ENCODE measurements at regions of chr17 and their contacts with region 1.

Region 1: GRCh38 chr17:63445979-63446691 is at the start of gene CYB561:
- DNase-seq: peak; percentile 63
- H3K4me3 ChIP-seq: peak within 1 kb of the TSS; percentile 2 to 49 (median 44)
- H3K27ac ChIP-seq: peak within 1 kb of the TSS; percentile 80
- H3K4me1 ChIP-seq: peaks cover 41% of the 10 kb centered on the region
- H3K27me3 ChIP-seq: no peaks in the 10 kb centered on the region
- CTCF ChIP-seq: peak; percentile 29 to 61
- POLR2A ChIP-seq: no peak
- total RNA-seq, gene CYB561: 71.1 and 72.4 TPM in 2 replicates

Region 2: GRCh38 chr17:63196772-63197335 is 249.3 kb before region 1 on chr17:
- CTCF ChIA-PET with region 1: no interaction called
- POLR2A ChIA-PET with region 1: no interaction called
- dilution Hi-C with region 1: no loop called
- intact Hi-C with region 1: no loop called
- DNase-seq: peak; percentile 54
- H3K4me3 ChIP-seq: peak overlapping the region in 1 of 3 experiments; percentile 48
- H3K27ac ChIP-seq: no peak overlapping the region
- H3K4me1 ChIP-seq: no peaks in the 10 kb centered on the region
- H3K27me3 ChIP-seq: no peaks in the 10 kb centered on the region
- CTCF ChIP-seq: no peak
- POLR2A ChIP-seq: no peak

Region 3: DNA sequence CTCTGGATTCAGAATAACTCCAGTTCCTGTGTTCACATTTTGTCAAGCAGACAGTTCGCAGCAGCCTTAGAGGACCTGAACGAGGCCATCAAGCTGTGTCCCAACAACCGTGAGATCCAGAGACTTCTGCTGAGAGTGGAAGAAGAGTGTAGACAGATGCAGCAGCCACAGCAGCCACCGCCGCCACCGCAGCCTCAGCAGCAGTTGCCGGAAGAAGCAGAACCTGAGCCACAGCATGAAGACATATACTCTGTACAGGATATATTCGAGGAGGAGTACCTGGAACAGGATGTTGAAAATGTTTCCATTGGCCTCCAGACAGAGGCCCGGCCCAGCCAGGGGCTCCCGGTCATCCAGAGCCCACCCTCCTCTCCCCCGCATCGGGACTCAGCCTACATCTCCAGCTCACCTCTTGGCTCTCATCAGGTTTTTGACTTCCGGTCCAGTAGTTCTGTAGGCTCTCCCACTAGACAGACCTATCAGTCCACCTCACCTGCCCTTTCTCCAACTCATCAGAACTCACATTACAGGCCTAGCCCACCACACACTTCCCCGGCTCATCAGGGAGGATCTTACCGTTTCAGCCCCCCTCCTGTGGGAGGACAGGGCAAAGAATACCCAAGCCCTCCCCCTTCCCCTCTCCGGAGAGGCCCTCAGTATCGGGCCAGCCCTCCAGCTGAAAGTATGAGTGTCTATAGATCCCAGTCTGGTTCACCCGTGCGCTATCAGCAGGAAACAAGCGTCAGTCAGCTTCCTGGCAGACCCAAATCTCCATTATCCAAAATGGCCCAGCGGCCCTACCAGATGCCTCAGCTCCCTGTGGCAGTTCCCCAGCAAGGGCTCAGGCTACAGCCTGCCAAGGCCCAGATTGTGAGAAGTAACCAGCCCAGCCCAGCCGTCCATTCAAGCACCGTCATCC is 25.9 kb before region 1 on chr17:
- CTCF ChIA-PET with region 1: interaction called, 66 read pairs
- POLR2A ChIA-PET with region 1: interaction called, 3 read pairs
- dilution Hi-C with region 1: no loop called
- intact Hi-C with region 1: loop called (anchors 1 kb)
- DNase-seq: peak; percentile 97
- H3K4me3 ChIP-seq: no peak overlapping the region
- H3K27ac ChIP-seq: peak overlapping the region; percentile 61
- H3K4me1 ChIP-seq: peaks cover 33% of the 10 kb centered on the region
- H3K27me3 ChIP-seq: no peaks in the 10 kb centered on the region
- CTCF ChIP-seq: no peak
- POLR2A ChIP-seq: peak; percentile 65

Region 4: DNA sequence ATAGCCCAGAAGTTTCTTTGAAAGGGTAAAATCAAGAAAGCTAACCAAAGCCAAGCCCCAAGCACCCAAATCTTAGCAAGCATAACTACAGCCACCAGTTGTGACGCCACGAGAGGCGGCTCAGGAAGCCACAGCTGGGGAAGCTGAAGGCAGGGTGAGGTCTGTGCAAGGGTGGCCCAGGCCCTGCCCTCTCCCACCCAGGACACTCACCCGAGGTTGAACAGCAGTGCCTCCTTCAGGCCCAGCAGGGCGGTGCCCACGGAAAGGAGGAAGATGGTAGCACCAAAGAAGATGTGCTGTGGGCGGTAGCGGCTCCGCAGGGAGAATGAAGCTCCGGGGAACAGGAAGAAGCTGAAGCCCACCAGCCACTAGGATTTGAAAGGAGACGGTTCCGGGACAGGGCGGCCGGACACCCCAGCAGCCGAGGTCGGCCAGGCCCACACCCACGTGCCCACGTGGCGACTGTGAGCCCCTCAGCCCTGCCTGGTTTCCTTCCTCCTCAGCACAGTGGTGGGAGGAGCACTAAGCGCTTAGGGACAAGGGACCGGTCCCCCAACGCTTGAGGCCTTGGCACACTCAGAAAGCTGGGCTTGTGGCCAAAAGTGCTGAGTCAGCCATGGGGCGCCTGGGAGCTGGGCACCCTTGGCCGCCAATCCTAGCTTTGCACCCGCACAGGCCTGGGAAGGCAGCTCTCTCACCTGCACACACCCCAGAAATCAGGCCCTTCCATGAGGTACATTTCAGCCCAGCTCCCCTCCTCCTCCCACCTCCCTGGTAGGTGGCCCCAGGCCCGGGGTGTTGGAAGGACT is 11.1 kb before region 1 on chr17:
- CTCF ChIA-PET with region 1: interaction called, 17 read pairs
- POLR2A ChIA-PET with region 1: interaction called, 4 read pairs
- dilution Hi-C with region 1: no loop called
- intact Hi-C with region 1: loop called (anchors 1 kb)
- DNase-seq: peak; percentile 39
- H3K4me3 ChIP-seq: no peak overlapping the region
- H3K27ac ChIP-seq: no peak overlapping the region
- H3K4me1 ChIP-seq: peaks cover 35% of the 10 kb centered on the region
- H3K27me3 ChIP-seq: no peaks in the 10 kb centered on the region
- CTCF ChIP-seq: peak; percentile 23 to 27
- POLR2A ChIP-seq: no peak

Region 5: DNA sequence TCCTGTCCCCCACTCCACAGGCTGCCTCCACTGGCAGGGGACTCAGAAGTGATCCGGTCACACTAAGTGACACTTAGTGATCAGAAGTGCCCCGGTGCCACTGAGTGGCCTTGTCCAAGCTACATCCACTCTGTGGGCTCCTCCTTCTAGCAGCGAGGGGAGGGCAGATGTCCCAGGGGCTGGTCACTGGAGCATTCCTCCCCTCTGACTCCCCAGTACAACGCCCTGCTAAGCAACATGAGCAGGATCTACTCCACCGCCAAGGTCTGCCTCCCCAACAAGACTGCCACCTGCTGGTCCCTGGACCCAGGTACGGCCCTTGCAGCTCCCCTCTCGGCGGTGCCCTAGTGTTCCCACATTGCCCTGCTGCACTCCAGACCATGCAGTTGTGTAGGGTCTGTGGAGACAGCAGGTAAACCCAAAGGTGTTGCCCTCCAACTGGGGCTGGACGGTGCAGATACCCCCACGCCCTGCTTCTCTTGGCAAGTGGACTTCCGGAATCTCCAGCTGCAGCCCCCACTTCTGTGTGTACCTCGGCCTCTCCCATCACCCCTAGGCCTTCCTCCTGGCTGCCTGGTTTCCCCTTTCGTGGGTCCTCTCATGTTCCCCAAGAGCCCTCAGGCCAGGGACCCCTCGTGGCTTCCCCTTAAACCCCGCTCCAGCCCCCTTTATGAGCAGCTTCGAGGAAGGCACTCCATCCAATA is 32.8 kb after region 1 on chr17:
- CTCF ChIA-PET with region 1: interaction called, 134 read pairs
- POLR2A ChIA-PET with region 1: interaction called, 13 read pairs
- dilution Hi-C with region 1: no loop called
- intact Hi-C with region 1: loop called (anchors 1 kb)
- DNase-seq: peak; percentile 81
- H3K4me3 ChIP-seq: peak overlapping the region in 1 of 3 experiments; percentile 62
- H3K27ac ChIP-seq: no peak overlapping the region
- H3K4me1 ChIP-seq: peaks cover 27% of the 10 kb centered on the region
- H3K27me3 ChIP-seq: no peaks in the 10 kb centered on the region
- CTCF ChIP-seq: peak; percentile 87 to 96
- POLR2A ChIP-seq: no peak

Region 6: DNA sequence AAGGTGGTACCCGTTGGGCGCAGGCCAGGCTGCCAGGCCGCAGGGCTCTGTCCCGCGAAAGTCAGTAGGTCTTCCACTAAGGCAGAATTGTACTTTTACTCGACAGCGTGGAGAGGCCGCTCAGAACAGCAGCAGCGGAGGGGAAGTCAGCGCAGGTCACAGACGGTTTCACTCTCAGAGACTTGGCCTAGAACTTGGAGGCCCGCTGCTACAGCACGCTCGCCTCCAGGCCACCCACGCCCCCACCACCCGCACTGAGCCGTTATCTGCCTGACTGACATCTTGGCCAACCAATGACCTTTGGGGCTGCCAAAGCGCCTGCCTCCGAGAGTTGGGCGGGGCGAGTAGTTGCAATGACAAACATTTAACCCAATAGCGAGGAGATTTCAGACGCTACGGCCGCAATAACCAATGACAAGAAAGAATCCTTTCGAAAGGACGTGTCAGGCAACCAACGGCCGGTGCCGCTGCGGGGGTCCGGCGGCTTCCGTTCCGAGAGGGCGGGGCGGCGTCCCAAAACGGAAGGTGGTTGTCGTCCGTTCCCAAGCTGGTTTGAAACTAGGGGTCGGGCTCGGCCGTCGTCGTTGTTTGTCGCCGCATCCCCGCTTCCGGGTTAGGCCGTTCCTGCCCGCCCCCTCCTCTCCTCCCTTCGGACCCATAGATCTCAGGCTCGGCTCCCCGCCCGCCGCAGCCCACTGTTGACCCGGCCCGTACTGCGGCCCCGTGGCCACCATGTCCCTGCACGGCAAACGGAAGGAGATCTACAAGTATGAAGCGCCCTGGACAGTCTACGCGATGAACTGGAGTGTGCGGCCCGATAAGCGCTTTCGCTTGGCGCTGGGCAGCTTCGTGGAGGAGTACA is 104.0 kb after region 1 on chr17 and contains the start of gene DCAF7:
- CTCF ChIA-PET with region 1: no interaction called
- POLR2A ChIA-PET with region 1: no interaction called
- dilution Hi-C with region 1: no loop called
- intact Hi-C with region 1: loop called (anchors 2 kb)
- DNase-seq: peak; percentile 100
- H3K4me3 ChIP-seq: peak within 1 kb of the TSS; percentile 42 to 77 (median 64)
- H3K27ac ChIP-seq: peak within 1 kb of the TSS; percentile 42
- H3K4me1 ChIP-seq: peaks cover 14% of the 10 kb centered on the region
- H3K27me3 ChIP-seq: no peaks in the 10 kb centered on the region
- CTCF ChIP-seq: no peak
- POLR2A ChIP-seq: peak; percentile 74
- total RNA-seq, gene DCAF7: 89.6 and 100 TPM in 2 replicates

Region 7: DNA sequence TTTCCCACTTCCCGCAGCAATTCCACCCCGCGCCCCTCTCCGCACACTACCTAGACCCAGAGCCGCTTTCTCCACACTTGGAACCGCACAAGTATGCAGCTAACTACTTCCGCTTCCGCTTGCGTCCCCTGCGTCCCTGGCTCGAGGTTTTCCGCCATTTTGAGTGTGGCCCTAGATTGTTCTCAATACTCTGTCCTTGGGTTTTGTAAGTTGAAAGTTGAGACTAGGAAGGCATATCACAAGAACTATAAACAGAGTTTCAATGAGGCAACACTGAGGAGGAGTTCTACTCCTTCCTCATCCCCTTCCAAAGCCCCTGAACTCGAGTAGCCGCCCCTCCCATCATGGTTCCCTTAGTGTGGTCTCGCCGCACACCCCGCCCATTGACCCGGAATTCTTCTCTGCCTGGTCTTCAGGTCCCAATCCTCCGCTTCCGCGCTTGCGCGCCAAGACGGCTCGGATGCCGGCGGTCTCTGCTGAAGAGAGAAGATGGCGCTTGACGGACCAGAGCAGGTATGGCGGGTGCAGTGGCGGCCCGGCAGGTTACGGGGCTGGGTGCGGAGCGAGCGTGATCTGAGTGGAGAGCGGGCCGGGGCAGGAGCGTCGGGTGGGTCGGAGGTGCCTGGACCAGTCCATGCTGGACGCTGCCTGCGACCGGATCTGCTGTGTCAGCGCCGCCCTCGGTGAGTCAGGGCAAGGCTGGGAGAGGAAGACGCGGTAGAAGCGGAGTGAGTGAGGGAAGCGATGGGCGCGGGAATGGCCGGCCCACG is 381.1 kb after region 1 on chr17 and contains the starts of genes FTSJ3 and PSMC5:
- CTCF ChIA-PET with region 1: no interaction called
- POLR2A ChIA-PET with region 1: no interaction called
- dilution Hi-C with region 1: no loop called
- intact Hi-C with region 1: loop called (anchors 2 kb)
- DNase-seq: peak; percentile 97
- H3K4me3 ChIP-seq: peak within 1 kb of the TSS; percentile 47 to 81 (median 72)
- H3K27ac ChIP-seq: peak within 1 kb of the TSS; percentile 92
- H3K4me1 ChIP-seq: peaks cover 23% of the 10 kb centered on the region
- H3K27me3 ChIP-seq: no peaks in the 10 kb centered on the region
- CTCF ChIP-seq: peak in 1 of 2 donors; percentile 57
- POLR2A ChIP-seq: peak; percentile 77
- total RNA-seq, gene FTSJ3: 50.2 and 60.2 TPM in 2 replicates
- total RNA-seq, gene PSMC5: 179 TPM in 2 replicates

Measured in endothelial cell of umbilical vein (primary cell).